ENCODE measurements at regions of chr2 and their contacts with region 1.

Region 1: DNA sequence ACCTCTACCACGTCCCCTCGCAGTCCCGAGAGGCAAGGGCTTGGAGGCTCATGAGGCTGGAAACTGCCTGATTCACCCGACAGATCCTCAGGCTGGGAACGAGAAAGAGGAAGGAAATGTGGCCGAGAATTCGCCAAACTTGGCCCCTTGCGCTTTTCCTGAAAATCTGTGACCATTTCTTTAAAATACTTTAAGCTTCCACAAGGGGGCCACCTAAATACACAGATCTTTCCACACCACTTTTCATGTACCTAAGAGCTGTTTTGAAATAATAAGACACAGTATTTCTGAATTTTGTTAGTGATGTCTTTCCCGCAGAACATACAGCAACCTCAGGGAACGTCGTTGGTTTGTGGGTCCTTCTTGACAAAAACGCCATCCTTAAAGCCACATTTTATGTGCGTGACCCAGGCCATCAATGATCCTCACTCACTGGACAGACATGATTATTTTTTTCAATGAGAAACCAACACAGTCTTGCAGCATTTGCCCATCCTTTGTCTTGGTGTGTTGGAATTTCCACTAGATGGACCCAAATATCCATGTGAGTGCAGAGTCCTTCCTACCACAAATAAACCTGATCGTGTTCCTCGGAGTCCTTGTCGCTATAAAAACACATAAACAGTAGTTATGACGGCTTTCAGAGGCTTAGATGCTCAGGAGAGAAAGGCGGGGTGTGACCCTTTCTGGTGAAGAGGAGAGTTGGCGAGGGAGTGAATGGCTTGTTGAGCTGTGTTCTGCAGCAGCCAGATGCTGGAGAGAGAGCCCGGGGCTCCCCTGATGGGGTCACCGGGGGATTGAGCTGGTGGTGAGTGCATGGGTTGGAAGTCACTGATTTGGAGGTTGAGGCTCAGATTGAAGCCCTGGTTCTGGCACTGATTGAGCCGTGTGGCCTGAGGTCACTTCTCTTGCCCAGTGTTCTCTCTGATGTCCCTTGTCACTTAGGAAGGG is 25.0 kb downstream of the DCDC2C start:
- DNase-seq: peak; percentile 56 to 59 (median 57)
- H3K4me3 ChIP-seq: peak overlapping the region in 1 of 7 experiments; percentile 5
- H3K27ac ChIP-seq: no peak overlapping the region
- H3K4me1 ChIP-seq: peaks cover 0 to 10% (median 4%) of the 10 kb centered on the region in 4 experiments
- H3K27me3 ChIP-seq: peaks cover 0 to 13% (median 0%) of the 10 kb centered on the region in 5 experiments

Region 2: GRCh38 chr2:3745920-3746319 is 17.5 kb after region 1 on chr2:
- CTCF ChIA-PET with region 1: interaction called, 11 read pairs
- POLR2A ChIA-PET with region 1: no interaction called
- DNase-seq: no peak
- H3K4me3 ChIP-seq: no peak overlapping the region
- H3K27ac ChIP-seq: no peak overlapping the region
- H3K4me1 ChIP-seq: peaks cover 0 to 16% (median 7%) of the 10 kb centered on the region in 4 experiments
- H3K27me3 ChIP-seq: no peaks in the 10 kb centered on the region

Region 3: DNA sequence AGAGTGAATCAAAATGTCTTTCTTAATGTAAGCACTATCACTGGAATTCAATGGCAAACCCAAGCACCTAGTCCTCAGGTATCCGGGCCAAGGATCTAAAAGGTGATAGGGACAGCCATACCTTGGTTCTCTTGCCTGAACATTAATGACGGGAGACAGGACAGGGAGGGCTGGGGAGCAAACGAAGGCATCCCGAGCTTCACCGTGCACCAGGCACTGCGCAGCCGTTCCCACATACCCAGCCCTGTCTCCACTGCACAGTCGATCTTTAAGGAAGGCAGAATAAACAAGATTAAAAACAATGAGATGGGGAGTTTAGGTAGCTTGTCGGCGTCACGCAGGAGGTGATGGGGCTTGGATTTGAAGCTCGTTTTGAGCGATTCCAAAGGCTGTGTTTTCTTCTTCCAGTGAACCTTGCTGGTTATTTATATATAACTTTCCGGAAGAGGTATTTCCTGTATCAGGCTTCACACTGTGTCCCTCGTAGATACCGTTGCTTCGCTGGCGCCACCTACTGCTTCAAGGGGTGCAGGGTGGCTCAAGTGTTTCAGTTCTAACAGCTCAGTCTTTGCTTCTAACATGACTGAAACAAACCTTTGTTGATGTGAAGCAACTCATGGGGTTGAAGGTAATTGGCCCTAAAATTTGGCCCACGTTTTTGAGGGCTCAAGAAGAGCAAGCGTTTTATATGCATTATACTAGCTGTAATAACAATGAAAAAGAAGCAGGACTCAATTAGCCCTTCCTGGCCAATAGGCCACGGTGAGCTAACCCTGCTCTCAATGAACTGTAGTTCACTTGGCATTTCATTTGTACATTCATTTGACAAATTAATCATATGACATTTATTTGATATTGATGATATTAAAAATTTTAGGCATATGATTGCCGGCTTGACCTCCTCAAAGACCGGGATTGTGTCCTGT is 52.4 kb after region 1 on chr2:
- CTCF ChIA-PET with region 1: interaction called, 76 read pairs
- POLR2A ChIA-PET with region 1: no interaction called
- DNase-seq: peak; percentile 62 to 81 (median 69)
- H3K4me3 ChIP-seq: peak overlapping the region in 5 of 7 experiments; percentile 11 to 70 (median 36)
- H3K27ac ChIP-seq: no peak overlapping the region
- H3K4me1 ChIP-seq: peaks cover 2 to 34% (median 20%) of the 10 kb centered on the region in 4 experiments
- H3K27me3 ChIP-seq: no peaks in the 10 kb centered on the region

Region 4: GRCh38 chr2:3805201-3805939 is 77.0 kb after region 1 on chr2:
- CTCF ChIA-PET with region 1: interaction called, 11 read pairs
- POLR2A ChIA-PET with region 1: no interaction called
- DNase-seq: peak in 2 of 3 donors; percentile 23 to 27
- H3K4me3 ChIP-seq: no peak overlapping the region
- H3K27ac ChIP-seq: no peak overlapping the region
- H3K4me1 ChIP-seq: peaks cover 0 to 4% (median 0%) of the 10 kb centered on the region in 4 experiments
- H3K27me3 ChIP-seq: peaks cover 0 to 9% (median 0%) of the 10 kb centered on the region in 5 experiments

Region 5: DNA sequence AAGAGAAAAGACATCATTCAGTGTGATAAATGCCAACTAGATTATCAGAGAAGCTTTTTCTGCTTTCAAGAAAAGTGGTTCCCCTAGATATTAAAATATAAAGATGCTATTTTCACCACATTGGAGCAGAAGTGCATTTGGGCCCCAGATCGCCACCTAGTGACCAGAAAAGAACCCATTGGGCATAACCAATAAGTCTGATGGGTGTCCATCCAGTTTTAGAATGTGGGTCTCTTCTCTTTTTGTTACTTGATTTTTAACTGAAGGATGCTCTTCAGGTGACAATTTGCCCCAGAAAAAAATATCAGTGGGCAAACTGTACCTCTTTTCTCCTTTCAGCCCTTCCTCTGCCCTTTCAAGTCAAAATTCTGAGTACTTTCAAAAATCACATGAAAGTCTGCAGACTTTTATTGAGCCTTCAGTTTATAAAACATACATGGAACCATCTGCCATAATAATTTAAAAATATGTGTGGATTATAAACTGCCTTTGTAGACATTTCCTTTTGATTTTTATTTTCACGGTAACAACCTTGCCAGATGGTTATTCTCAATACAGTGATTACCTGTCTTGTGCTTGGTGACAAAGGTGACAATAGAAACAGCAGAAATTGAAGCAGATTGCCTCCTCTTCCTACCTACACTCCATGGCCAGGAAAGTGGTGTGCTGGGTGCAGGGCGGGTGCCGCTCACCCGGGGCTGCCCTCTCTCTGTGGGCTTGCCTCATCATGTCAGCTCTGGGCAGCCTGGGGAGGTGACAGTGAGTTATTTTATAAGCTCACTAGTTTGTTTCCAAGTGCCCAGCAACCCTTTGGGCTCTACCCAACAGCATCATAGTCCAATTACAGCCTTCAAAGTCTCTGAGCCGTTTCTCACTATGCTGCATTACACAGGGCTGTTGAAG is 99.5 kb after region 1 on chr2:
- CTCF ChIA-PET with region 1: interaction called, 57 read pairs
- POLR2A ChIA-PET with region 1: no interaction called
- DNase-seq: peak; percentile 27 to 48 (median 42)
- H3K4me3 ChIP-seq: no peak overlapping the region
- H3K27ac ChIP-seq: no peak overlapping the region
- H3K4me1 ChIP-seq: no peaks in the 10 kb centered on the region
- H3K27me3 ChIP-seq: peaks cover 0 to 3% (median 0%) of the 10 kb centered on the region in 5 experiments

Measured in common myeloid progenitor, CD34-positive (primary cell).